Activated B cell treated with CpG ODN at 0.5 μM for 24 hours (primary cell): ENCODE measurements at regions of chr1 and their contacts with region 1.

Region 1: GRCh38 chr1:185317034-185317885 is at the start of gene IVNS1ABP:
- DNase-seq: peak; percentile 90
- ATAC-seq: peak; percentile 73
- H3K4me3 Mint-ChIP-seq: peak within 1 kb of the TSS; percentile 97
- H3K27ac Mint-ChIP-seq: peak within 1 kb of the TSS; percentile 98
- H3K4me1 Mint-ChIP-seq: peaks cover 49% of the 10 kb centered on the region
- H3K27me3 Mint-ChIP-seq: no peaks in the 10 kb centered on the region
- CTCF ChIP-seq: no peak
- total RNA-seq, gene IVNS1ABP: 130 and 149 TPM in 2 replicates

Region 2: DNA sequence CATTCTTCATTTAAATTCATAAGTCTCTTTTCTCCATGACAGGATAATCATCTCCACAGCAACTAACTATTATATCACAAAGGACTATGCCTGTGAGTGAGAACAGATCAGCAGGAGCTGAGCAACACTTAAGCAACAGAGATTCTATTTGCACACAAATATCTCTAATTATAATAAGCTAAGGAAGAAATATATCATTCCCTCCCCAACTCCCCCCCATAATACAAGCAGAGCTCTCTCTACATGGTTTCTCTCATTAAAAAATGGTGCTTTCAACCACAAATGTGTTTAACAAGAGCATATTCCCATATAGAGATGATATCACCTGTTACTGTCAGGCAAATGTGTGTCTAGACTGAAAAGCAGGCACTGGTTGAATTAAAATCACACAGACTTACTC is 308.4 kb before region 1 on chr1:
- CTCF ChIA-PET with region 1: no interaction called
- POLR2A ChIA-PET with region 1: no interaction called
- intact Hi-C with region 1: no loop called
- DNase-seq: no peak
- ATAC-seq: no peak
- H3K4me3 Mint-ChIP-seq: no peak overlapping the region
- H3K27ac Mint-ChIP-seq: no peak overlapping the region
- H3K4me1 Mint-ChIP-seq: no peaks in the 10 kb centered on the region
- H3K27me3 Mint-ChIP-seq: peaks cover 7% of the 10 kb centered on the region
- CTCF ChIP-seq: no peak

Region 3: GRCh38 chr1:185044981-185045813 is 272.1 kb before region 1 on chr1 and contains the start of gene RNF2:
- CTCF ChIA-PET with region 1: no interaction called
- POLR2A ChIA-PET with region 1: no interaction called
- intact Hi-C with region 1: loop called (anchors 2 kb)
- DNase-seq: peak; percentile 84
- ATAC-seq: peak; percentile 92
- H3K4me3 Mint-ChIP-seq: peak within 1 kb of the TSS; percentile 92
- H3K27ac Mint-ChIP-seq: peak within 1 kb of the TSS; percentile 91
- H3K4me1 Mint-ChIP-seq: peaks cover 31% of the 10 kb centered on the region
- H3K27me3 Mint-ChIP-seq: no peaks in the 10 kb centered on the region
- CTCF ChIP-seq: no peak
- total RNA-seq, gene RNF2: 23.4 and 24.5 TPM in 2 replicates

Region 4: DNA sequence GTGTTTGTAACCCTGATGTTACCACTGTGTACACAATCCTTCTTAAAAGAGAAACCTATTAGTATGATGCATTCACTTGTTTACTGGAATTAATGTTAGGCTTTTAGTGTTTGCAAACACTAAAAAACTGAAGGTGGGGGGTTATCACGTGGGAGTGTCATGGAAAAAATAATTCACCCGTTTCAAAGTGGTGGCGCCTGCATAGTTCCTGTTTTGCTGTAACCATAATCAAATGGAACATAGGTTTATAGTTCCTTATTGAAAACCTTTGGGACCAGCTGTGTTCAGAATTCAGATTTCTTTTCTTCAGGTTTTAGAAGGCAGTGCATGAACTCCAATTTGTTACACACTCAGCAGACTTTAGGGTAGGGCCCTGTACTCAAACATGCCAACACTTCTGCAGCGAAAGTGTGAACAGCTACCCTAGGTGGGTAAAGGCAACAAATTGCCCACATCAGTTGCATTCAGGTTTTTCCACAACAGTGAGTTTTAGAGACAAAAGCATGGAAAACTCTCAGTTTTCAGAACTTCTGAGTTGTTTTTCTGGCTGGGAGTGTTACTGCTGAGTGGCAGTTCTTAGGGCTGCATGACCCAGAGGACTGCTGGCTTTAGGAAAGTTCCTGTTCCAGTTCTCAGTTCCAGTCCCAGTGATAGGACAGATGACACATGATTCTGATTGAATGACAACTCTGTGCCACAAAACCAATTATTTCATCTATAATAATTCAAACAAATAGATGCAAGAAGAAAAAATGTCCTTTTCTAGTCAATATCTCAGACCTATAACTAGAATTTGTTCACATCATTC is 28.9 kb after region 1 on chr1:
- CTCF ChIA-PET with region 1: no interaction called
- POLR2A ChIA-PET with region 1: interaction called, 7 read pairs
- intact Hi-C with region 1: loop called (anchors 1 kb)
- DNase-seq: no peak
- ATAC-seq: peak; percentile 79
- H3K4me3 Mint-ChIP-seq: peak overlapping the region; percentile 47
- H3K27ac Mint-ChIP-seq: peak overlapping the region; percentile 24
- H3K4me1 Mint-ChIP-seq: peaks cover 29% of the 10 kb centered on the region
- H3K27me3 Mint-ChIP-seq: no peaks in the 10 kb centered on the region
- CTCF ChIP-seq: no peak

Region 5: GRCh38 chr1:185526344-185527307 is 209.4 kb after region 1 on chr1:
- CTCF ChIA-PET with region 1: interaction called, 3 read pairs
- POLR2A ChIA-PET with region 1: interaction called, 14 read pairs
- intact Hi-C with region 1: loop called (anchors 10 kb)
- DNase-seq: no peak
- ATAC-seq: peak; percentile 97
- H3K4me3 Mint-ChIP-seq: peak overlapping the region; percentile 1
- H3K27ac Mint-ChIP-seq: peak overlapping the region; percentile 77
- H3K4me1 Mint-ChIP-seq: peaks cover 21% of the 10 kb centered on the region
- H3K27me3 Mint-ChIP-seq: no peaks in the 10 kb centered on the region
- CTCF ChIP-seq: no peak

Region 6: GRCh38 chr1:185603158-185603557 is 285.9 kb after region 1 on chr1:
- CTCF ChIA-PET with region 1: interaction called, 4 read pairs
- POLR2A ChIA-PET with region 1: interaction called, 68 read pairs
- intact Hi-C with region 1: loop called (anchors 1 kb)
- DNase-seq: peak; percentile 26
- ATAC-seq: peak; percentile 92
- H3K4me3 Mint-ChIP-seq: no peak overlapping the region
- H3K27ac Mint-ChIP-seq: no peak overlapping the region
- H3K4me1 Mint-ChIP-seq: peaks cover 42% of the 10 kb centered on the region
- H3K27me3 Mint-ChIP-seq: no peaks in the 10 kb centered on the region
- CTCF ChIP-seq: no peak

Region 7: DNA sequence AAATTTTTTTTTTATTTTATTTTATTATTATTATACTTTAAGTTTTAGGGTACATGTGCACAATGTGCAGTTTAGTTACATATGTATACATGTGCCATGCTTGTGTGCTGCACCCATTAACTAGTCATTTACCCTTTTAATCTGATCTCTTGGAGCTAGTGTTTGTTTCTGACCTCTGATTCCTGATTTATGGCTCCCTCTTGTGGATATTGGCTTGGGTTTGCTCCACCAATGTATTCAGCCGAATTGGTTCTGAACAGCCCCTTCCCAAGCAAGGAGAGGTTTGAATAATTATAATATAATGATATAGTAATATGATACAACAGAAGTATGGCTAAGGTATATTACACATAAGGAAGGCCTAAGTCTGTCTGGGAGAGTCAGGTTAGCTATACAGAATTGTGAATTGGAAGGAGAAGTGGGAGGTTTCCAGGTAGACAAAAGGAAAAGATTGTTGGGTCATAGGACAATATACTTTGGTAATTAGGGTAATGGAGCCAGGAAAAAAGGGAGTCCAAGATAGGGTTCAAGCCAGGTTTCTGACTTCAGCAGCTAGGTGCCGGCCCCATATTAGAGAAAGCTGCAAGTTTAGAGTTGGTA is 363.9 kb after region 1 on chr1:
- CTCF ChIA-PET with region 1: interaction called, 26 read pairs
- POLR2A ChIA-PET with region 1: interaction called, 35 read pairs
- intact Hi-C with region 1: loop called (anchors 1 kb)
- DNase-seq: no peak
- ATAC-seq: peak; percentile 67
- H3K4me3 Mint-ChIP-seq: no peak overlapping the region
- H3K27ac Mint-ChIP-seq: no peak overlapping the region
- H3K4me1 Mint-ChIP-seq: peaks cover 19% of the 10 kb centered on the region
- H3K27me3 Mint-ChIP-seq: no peaks in the 10 kb centered on the region
- CTCF ChIP-seq: peak; percentile 50